K562 (cell line): ENCODE measurements at regions of chr2 and their contacts with region 1.

Region 1: GRCh38 chr2:55419679-55420438 is at the start of gene CCDC88A:
- DNase-seq: peak; percentile 91 to 99 (median 92)
- ATAC-seq: peak; percentile 87
- H3K4me3 ChIP-seq: peak within 1 kb of the TSS; percentile 91
- H3K27ac ChIP-seq: peak within 1 kb of the TSS; percentile 84
- H3K4me1 ChIP-seq: peaks cover 4 to 9% of the 10 kb centered on the region in 2 experiments
- H3K27me3 ChIP-seq: no peaks in the 10 kb centered on the region; a peak in 1 of 5 replicates
- CTCF ChIP-seq: peak; percentile 13 to 27 (median 14); a peak in 1 of 6 replicates
- EP300 ChIP-seq: peak; percentile 70
- POLR2A ChIP-seq: peak; percentile 94
- RAD21 ChIP-seq: peak; percentile 36 to 38; a peak in 2 of 4 replicates
- polyA plus RNA-seq, gene CCDC88A: 29.3 to 30.3 TPM

Region 2: DNA sequence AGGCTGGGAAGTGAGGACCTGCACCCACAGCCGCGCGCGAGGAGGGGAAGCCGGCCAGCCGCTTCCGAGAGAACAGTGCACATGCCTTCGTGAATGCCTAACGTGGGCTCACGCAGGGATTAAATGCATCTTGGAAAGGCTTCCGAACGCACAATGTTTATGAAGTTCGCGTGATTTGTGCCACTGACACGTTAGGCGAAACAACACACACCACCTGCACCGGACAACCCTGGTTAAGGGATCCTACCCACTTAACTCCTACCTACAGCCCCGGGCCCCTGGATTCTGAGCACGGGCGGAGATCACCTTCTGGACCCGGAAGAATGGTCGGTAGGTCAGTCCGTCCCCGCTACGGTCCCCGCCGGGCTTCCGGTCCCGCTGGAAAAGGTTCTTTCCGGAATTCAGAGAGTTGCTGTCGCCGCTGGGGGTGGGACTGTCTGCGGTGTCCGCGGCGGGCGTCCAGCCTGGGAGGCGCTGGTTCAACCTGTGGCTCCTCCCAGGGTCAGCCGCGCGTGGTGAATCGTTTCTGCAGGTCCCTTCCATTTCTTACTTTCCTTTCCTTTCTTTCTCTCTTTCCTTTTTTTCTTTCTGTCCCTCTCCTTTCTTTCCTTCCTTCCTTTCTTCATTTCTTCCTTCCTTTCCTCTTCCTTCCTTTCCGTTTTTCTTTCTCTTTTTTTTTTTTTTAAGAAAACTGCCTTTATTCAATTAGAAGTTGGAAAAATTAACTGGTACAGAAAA is 150.8 kb before region 1 on chr2 and contains the start of gene MTIF2:
- CTCF ChIA-PET with region 1: no interaction called
- POLR2A ChIA-PET with region 1: interaction called, 3 read pairs
- in situ Hi-C with region 1: no loop called
- intact Hi-C with region 1: loop called (anchors 5 kb)
- DNase-seq: peak; percentile 88 to 98 (median 91)
- ATAC-seq: peak; percentile 100
- H3K4me3 ChIP-seq: peak within 1 kb of the TSS; percentile 71
- H3K27ac ChIP-seq: peak within 1 kb of the TSS; percentile 91
- H3K4me1 ChIP-seq: peaks cover 7 to 8% of the 10 kb centered on the region in 2 experiments; a peak in 3 of 5 replicates
- H3K27me3 ChIP-seq: no peaks in the 10 kb centered on the region
- CTCF ChIP-seq: peak; percentile 24 to 50 (median 36); a peak in 4 of 6 replicates
- EP300 ChIP-seq: peak; percentile 50; the same call in 1 of the 2 replicates
- POLR2A ChIP-seq: peak; percentile 97
- RAD21 ChIP-seq: peak in 1 of 2 experiments; percentile 37; a peak in 2 of 4 replicates
- polyA plus RNA-seq, gene MTIF2: 58.7 to 106 TPM

Region 3: GRCh38 chr2:55364189-55365055 is 55.4 kb before region 1 on chr2:
- CTCF ChIA-PET with region 1: no interaction called
- POLR2A ChIA-PET with region 1: no interaction called
- in situ Hi-C with region 1: no loop called
- intact Hi-C with region 1: loop called (anchors 5 kb)
- DNase-seq: no peak
- ATAC-seq: no peak; the same call in 2 of the 3 replicates
- H3K4me3 ChIP-seq: no peak overlapping the region
- H3K27ac ChIP-seq: no peak overlapping the region
- H3K4me1 ChIP-seq: peaks cover 3 to 8% of the 10 kb centered on the region in 2 experiments; a peak in 2 of 5 replicates
- H3K27me3 ChIP-seq: no peaks in the 10 kb centered on the region
- CTCF ChIP-seq: no peak
- EP300 ChIP-seq: no peak
- POLR2A ChIP-seq: no peak
- RAD21 ChIP-seq: no peak

Region 4: GRCh38 chr2:55519938-55520885 is 100.4 kb after region 1 on chr2:
- CTCF ChIA-PET with region 1: no interaction called
- POLR2A ChIA-PET with region 1: interaction called, 4 read pairs
- in situ Hi-C with region 1: no loop called
- intact Hi-C with region 1: loop called (anchors 5 kb)
- DNase-seq: peak; percentile 21 to 45 (median 38)
- ATAC-seq: peak; percentile 25
- H3K4me3 ChIP-seq: peak overlapping the region; percentile 84
- H3K27ac ChIP-seq: peak overlapping the region; percentile 53
- H3K4me1 ChIP-seq: peaks cover 2 to 3% of the 10 kb centered on the region in 2 experiments; a peak in 2 of 5 replicates
- H3K27me3 ChIP-seq: no peaks in the 10 kb centered on the region
- CTCF ChIP-seq: no peak
- EP300 ChIP-seq: no peak
- POLR2A ChIP-seq: no peak
- RAD21 ChIP-seq: no peak